ENCODE measurements at regions of chr6 and their contacts with region 1.

Region 1: DNA sequence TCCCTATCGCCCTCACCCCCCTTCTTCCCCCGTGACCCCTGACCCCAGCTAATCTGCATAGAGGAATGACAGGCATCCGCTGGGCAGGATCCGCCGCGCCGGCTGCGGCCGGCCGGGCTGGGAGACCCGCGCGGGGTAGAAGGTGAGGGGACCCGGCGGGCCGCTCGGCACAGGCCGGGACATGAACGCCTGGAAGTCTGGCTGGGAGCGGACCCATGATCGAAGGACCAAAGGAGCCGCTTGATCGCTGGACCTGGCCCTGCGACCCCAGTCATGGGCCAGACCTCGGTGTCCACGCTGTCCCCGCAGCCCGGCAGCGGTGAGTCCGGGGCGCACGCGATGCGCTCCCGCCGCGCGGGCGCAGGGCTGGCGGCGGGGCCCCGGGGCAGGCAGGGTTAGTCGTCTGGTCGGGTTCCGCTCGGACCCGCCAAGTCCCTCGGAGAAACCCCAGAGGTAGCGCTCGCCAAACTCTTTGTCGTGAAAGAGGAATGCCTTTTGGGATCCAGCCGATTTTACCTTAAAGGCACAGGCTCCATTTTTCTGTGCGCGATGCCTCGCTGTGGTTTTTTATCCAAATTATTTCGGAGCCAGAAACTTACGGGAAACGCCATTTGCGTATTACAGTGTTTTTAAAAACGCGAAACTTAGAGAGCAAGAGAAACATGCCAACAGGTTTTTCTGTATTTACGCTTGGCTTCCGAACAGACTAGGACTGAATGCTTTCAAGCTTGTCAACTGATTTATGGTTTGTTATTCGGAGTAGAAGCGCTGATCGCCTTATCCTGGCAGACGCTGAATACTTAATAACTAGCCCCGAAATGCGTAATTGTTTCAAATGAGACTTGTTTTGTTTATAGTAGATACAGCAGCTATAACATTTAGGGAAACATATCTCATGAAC is at the start of gene PHACTR2:
- DNase-seq: peak; percentile 80 to 88
- ATAC-seq: peak; percentile 92 to 95 (median 93)
- H3K4me3 ChIP-seq: peak within 1 kb of the TSS; percentile 85
- H3K27ac ChIP-seq: peak within 1 kb of the TSS; percentile 92
- H3K4me1 ChIP-seq: peaks cover 5% of the 10 kb centered on the region
- H3K27me3 ChIP-seq: no peaks in the 10 kb centered on the region
- CTCF ChIP-seq: no peak
- total RNA-seq, gene PHACTR2: 30.0 to 48.8 (median 39.5) TPM

Region 2: DNA sequence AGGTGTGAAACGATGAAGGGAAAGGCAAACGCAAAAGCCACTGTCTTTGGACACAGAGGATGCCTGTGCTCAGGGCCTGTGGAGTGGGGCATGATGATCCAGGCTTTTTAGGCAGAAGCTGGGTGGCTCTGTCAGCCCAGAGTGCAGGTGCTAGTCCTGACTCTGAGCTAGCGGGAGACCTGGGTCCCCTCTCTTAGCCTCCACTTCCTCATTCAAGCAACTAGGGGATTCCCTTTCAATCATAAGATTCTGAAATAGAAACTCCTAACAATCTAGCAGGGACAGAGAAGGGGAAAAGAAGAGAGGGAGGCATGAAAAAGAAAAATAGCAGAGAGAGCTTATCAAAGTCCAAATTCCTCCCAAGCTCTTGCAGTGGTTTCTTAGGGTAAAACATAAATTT is 725.5 kb before region 1 on chr6:
- intact Hi-C with region 1: loop called in 1 of 2 experiments (anchors 10 kb)
- DNase-seq: no peak
- ATAC-seq: no peak
- H3K4me3 ChIP-seq: no peak overlapping the region
- H3K27ac ChIP-seq: no peak overlapping the region
- H3K4me1 ChIP-seq: no peaks in the 10 kb centered on the region
- H3K27me3 ChIP-seq: no peaks in the 10 kb centered on the region
- CTCF ChIP-seq: no peak

Region 3: DNA sequence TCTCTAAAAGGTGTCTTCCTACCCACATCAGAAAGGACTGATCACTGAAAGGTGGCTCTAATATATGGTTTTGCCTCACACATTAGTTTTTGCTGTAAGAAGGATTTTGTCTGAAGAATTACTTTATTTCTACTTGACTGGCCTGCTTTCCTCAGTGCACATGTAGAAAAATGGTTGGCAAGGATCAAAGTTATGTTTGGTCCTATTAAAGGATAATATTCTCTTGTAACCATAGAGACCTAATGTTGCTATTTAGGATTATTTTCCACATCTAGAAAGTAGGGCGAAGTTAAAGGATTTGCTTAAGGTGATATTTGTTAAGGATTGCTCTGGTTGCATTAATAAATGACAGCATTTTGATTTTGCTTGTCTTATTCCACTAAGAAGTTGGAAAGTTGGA is 40.3 kb after region 1 on chr6:
- intact Hi-C with region 1: no loop called
- DNase-seq: no peak
- ATAC-seq: no peak
- H3K4me3 ChIP-seq: no peak overlapping the region
- H3K27ac ChIP-seq: no peak overlapping the region
- H3K4me1 ChIP-seq: no peaks in the 10 kb centered on the region
- H3K27me3 ChIP-seq: no peaks in the 10 kb centered on the region
- CTCF ChIP-seq: no peak

Region 4: DNA sequence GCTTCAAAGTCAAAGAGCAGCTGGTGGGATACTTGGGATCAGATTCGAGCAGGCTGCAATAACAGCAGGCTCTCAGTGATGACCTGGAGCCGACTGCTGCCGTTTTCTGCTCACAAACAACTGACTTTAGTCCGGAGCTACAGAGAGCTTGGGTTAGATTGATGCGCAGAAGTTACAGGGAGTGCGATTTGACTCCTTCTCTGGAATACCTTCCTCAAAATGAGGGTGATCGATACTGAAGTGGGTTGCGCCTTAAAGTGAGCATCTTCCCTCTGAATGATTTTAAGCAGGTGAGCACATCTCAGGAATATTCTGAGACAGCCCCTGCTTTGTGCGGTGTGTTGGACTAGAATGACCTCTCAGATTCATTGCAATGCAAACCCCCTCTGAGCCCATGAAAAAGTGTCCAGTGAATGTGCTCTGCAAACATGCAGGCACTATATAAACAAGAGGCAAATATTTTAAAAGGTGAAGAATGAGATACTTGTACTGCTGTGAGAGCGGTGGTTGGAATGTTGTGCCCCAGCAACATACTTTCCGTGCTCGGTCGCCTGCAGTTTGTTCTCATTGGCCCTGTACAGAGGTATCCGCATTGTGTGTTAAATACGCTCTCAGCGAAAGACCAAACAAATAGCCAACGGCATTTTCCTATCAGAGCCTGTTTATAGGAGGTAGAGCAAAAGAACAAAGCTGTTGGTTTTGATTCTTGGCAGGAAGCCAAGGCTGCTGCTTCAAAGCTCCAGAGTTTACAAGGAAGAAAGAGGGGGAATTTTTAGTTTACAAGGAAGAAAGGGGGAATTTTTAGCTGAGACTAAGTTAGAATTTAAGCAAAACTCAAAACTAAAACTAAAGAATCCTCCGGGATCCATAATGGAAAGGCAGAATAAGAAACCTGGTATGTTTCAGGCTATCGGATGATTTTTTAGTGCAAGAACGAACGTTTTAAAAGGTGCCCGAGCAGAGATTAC is 67.3 kb after region 1 on chr6:
- intact Hi-C with region 1: loop called in 1 of 2 experiments (anchors 5 kb)
- DNase-seq: no peak
- ATAC-seq: peak; percentile 20 to 43 (median 31)
- H3K4me3 ChIP-seq: peak overlapping the region; percentile 37
- H3K27ac ChIP-seq: no peak overlapping the region
- H3K4me1 ChIP-seq: peaks cover 34% of the 10 kb centered on the region
- H3K27me3 ChIP-seq: no peaks in the 10 kb centered on the region
- CTCF ChIP-seq: no peak

Region 5: DNA sequence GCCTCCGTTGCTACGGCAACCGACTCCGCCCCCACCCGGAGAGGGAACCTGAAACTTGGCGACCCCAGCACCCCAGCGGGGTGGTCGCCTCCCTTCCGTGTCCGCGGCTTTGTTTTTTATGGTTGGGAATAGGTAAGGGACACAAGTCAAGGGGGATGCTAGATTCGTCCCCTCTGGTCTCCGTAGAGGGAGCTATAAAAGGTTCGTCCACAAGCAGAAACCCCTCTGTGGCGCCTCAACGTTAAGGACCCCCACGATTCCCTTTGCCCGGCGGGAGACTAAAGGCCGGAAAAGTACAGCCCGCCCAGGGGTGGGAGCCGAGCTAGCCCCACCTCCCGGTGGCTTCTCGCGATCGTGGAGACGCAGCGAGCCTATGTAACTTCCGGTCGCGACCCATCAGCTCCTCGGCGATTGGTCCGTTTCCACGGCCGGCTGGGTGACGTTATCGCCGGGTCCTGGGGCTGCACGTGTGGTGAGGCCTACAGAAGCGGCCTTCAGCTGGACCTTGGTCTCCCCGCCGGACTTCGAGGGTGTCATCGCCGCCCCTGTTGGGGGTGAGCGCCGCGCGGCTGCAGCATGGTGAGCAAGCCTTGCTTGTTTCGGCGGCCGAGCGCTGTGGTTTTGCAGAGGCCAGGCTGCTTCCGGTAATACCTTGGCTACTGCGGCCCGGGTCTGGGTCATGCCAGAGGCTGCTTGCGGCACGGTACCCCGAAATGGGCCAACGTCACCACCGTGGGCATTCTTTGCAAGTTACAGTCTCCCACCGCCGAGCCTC is 164.9 kb after region 1 on chr6 and contains the start of gene LTV1:
- intact Hi-C with region 1: loop called in 1 of 2 experiments (anchors 5 kb)
- DNase-seq: peak; percentile 97 to 98
- ATAC-seq: peak; percentile 99 to 100 (median 100)
- H3K4me3 ChIP-seq: peak within 1 kb of the TSS; percentile 85
- H3K27ac ChIP-seq: peak within 1 kb of the TSS; percentile 86
- H3K4me1 ChIP-seq: peaks cover 15% of the 10 kb centered on the region
- H3K27me3 ChIP-seq: no peaks in the 10 kb centered on the region
- CTCF ChIP-seq: no peak
- total RNA-seq, gene LTV1: 19.1 to 36.6 (median 31.7) TPM

Region 6: GRCh38 chr6:144417686-144418085 is 739.5 kb after region 1 on chr6:
- intact Hi-C with region 1: no loop called
- DNase-seq: no peak
- ATAC-seq: no peak
- H3K4me3 ChIP-seq: no peak overlapping the region
- H3K27ac ChIP-seq: peak overlapping the region; percentile 14
- H3K4me1 ChIP-seq: peaks cover 24% of the 10 kb centered on the region
- H3K27me3 ChIP-seq: no peaks in the 10 kb centered on the region
- CTCF ChIP-seq: no peak

Measured in psoas muscle (tissue), 8 donors.